ENCODE measurements at regions of chr16 and their contacts with region 1.

Region 1: DNA sequence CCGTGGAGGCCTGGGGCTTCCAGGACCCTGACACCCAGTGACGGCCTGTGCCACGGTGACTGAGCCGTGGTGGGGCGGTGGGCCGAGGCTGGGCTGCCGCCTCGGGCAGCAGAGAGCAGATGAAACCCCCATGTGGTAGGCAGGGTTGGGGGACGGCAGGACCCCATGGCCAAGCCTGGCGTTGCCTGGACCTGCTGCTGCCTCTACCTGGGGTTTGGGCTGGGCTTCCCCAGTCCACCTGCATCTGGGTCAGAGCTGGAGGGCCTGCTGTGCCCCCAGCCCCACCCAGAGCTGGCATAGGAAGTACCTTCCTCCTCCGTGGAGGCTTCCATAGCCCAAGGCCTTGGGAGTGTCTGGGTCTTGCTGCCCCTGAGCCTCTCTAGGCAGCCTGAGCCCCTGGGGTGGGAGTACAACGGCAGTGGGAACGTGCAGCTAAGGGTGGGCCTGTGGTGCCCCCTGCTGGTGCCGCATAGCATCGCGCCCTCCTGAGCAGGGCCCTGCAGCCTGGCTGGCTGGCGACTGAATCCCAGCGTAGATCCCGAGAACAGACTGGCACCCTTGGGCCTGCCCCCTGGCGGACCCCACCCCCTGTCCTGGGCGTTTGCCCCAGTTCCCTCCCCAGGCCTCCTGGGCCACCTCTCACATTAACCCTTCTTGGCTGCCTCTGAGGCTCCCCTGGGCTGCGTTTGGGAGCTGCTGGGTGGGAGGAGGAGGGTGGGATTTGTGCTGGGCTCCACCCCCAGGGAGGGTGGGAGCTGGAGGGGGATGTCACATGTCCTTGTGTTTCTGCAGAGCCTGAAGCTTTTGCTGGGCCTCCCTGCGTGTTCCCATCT is 12.6 kb upstream of the ATP6V0C start:
- DNase-seq: peak; percentile 74 to 87
- H3K4me3 ChIP-seq: no peak overlapping the region
- H3K4me3 Mint-ChIP-seq: no peak overlapping the region
- H3K27ac Mint-ChIP-seq: no peak overlapping the region
- H3K4me1 ChIP-seq: 0 out of 2 replicates have a peak, but pooled peaks cover 8% of the 10 kb centered on the region
- H3K4me1 Mint-ChIP-seq: peaks cover 6% of the 10 kb centered on the region
- H3K27me3 ChIP-seq: no peaks in the 10 kb centered on the region
- H3K27me3 Mint-ChIP-seq: no peaks in the 10 kb centered on the region
- CTCF ChIP-seq: peak; percentile 91 to 93

Region 2: DNA sequence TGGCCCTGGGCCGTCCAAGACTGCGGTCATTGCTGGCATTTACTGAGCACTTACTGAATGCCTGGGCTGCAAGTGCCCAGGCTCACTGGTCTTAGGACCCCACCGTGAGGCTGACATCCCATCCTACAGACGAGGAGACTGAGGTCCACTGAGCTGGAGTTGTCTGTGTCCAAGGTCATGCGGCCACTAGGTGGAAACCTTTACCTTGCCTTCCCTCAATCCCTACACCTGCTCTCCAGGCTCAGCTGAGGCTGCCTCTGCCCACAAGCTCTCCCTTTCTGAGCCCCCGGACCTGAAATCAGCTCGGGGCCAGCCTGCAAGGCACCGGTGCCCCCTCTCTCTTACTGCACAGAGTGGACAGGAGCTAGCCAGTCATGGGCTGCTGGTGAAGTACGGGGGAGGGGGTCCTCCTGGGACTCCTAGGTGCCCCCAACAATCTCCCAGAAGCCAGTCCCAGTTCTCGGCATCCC is 306.2 kb before region 1 on chr16:
- CTCF ChIA-PET with region 1: interaction called, 11 read pairs
- POLR2A ChIA-PET with region 1: no interaction called
- intact Hi-C with region 1: loop called (anchors 2 kb)
- DNase-seq: peak; percentile 70 to 73
- H3K4me3 ChIP-seq: peak overlapping the region; percentile 49
- H3K4me3 Mint-ChIP-seq: peak overlapping the region; percentile 63
- H3K27ac Mint-ChIP-seq: no peak overlapping the region
- H3K4me1 ChIP-seq: peaks cover 9% of the 10 kb centered on the region
- H3K4me1 Mint-ChIP-seq: no peaks in the 10 kb centered on the region
- H3K27me3 ChIP-seq: no peaks in the 10 kb centered on the region
- H3K27me3 Mint-ChIP-seq: no peaks in the 10 kb centered on the region
- CTCF ChIP-seq: peak in 1 of 2 experiments; percentile 49

Region 3: GRCh38 chr16:2340564-2341455 is 160.3 kb before region 1 on chr16 and contains the start of gene ABCA3:
- CTCF ChIA-PET with region 1: no interaction called
- POLR2A ChIA-PET with region 1: no interaction called
- intact Hi-C with region 1: loop called (anchors 2 kb)
- DNase-seq: peak; percentile 91 to 99
- H3K4me3 ChIP-seq: peak within 1 kb of the TSS; percentile 83
- H3K4me3 Mint-ChIP-seq: peak within 1 kb of the TSS; percentile 91
- H3K27ac Mint-ChIP-seq: peak within 1 kb of the TSS; percentile 86
- H3K4me1 ChIP-seq: 0 out of 2 replicates have a peak, but pooled peaks cover 3% of the 10 kb centered on the region
- H3K4me1 Mint-ChIP-seq: no peaks in the 10 kb centered on the region
- H3K27me3 ChIP-seq: no peaks in the 10 kb centered on the region
- H3K27me3 Mint-ChIP-seq: peaks cover 3% of the 10 kb centered on the region
- CTCF ChIP-seq: peak; percentile 89 to 99
- total RNA-seq, gene ABCA3: 14.6 and 16.1 TPM in 2 replicates

Region 4: GRCh38 chr16:2429034-2429770 is 71.9 kb before region 1 on chr16 and contains the start of gene CCNF:
- CTCF ChIA-PET with region 1: interaction called, 4 read pairs
- POLR2A ChIA-PET with region 1: no interaction called
- intact Hi-C with region 1: loop called (anchors 10 kb)
- DNase-seq: peak; percentile 97 to 98
- H3K4me3 ChIP-seq: peak within 1 kb of the TSS; percentile 90
- H3K4me3 Mint-ChIP-seq: peak within 1 kb of the TSS; percentile 90
- H3K27ac Mint-ChIP-seq: peak within 1 kb of the TSS; percentile 92
- H3K4me1 ChIP-seq: peaks cover 15% of the 10 kb centered on the region
- H3K4me1 Mint-ChIP-seq: peaks cover 21% of the 10 kb centered on the region
- H3K27me3 ChIP-seq: no peaks in the 10 kb centered on the region
- H3K27me3 Mint-ChIP-seq: no peaks in the 10 kb centered on the region
- CTCF ChIP-seq: no peak
- total RNA-seq, gene CCNF: 48.7 and 52.4 TPM in 2 replicates

Region 5: GRCh38 chr16:2467521-2468151 is 33.5 kb before region 1 on chr16:
- CTCF ChIA-PET with region 1: interaction called, 14 read pairs
- POLR2A ChIA-PET with region 1: interaction called, 3 read pairs
- intact Hi-C with region 1: no loop called
- DNase-seq: peak; percentile 75 to 78
- H3K4me3 ChIP-seq: peak overlapping the region; percentile 47
- H3K4me3 Mint-ChIP-seq: peak overlapping the region; percentile 80
- H3K27ac Mint-ChIP-seq: peak overlapping the region; percentile 55
- H3K4me1 ChIP-seq: peaks cover 26% of the 10 kb centered on the region
- H3K4me1 Mint-ChIP-seq: peaks cover 6% of the 10 kb centered on the region
- H3K27me3 ChIP-seq: no peaks in the 10 kb centered on the region
- H3K27me3 Mint-ChIP-seq: no peaks in the 10 kb centered on the region
- CTCF ChIP-seq: peak in 1 of 2 experiments; percentile 14

Region 6: GRCh38 chr16:2474877-2475412 is 26.2 kb before region 1 on chr16 and contains the start of gene TBC1D24:
- CTCF ChIA-PET with region 1: interaction called, 8 read pairs
- POLR2A ChIA-PET with region 1: no interaction called
- intact Hi-C with region 1: loop called (anchors 2 kb)
- DNase-seq: peak; percentile 83 to 92
- H3K4me3 ChIP-seq: peak within 1 kb of the TSS; percentile 92
- H3K4me3 Mint-ChIP-seq: peak within 1 kb of the TSS; percentile 73
- H3K27ac Mint-ChIP-seq: no peak within 1 kb of the TSS
- H3K4me1 ChIP-seq: peaks cover 27% of the 10 kb centered on the region
- H3K4me1 Mint-ChIP-seq: peaks cover 8% of the 10 kb centered on the region
- H3K27me3 ChIP-seq: no peaks in the 10 kb centered on the region
- H3K27me3 Mint-ChIP-seq: no peaks in the 10 kb centered on the region
- CTCF ChIP-seq: no peak
- total RNA-seq, gene TBC1D24: 20.8 and 22.6 TPM in 2 replicates